ENCODE measurements at regions of chr7 and their contacts with region 1.

Region 1: GRCh38 chr7:100586266-100587025 is at the start of gene FBXO24:
- DNase-seq: peak; percentile 94
- ATAC-seq: peak; percentile 80
- H3K4me3 Mint-ChIP-seq: peak within 1 kb of the TSS; percentile 93
- H3K27ac Mint-ChIP-seq: peak within 1 kb of the TSS; percentile 96
- H3K4me1 Mint-ChIP-seq: peaks cover 38% of the 10 kb centered on the region
- H3K27me3 Mint-ChIP-seq: peaks cover 6% of the 10 kb centered on the region
- CTCF ChIP-seq: no peak
- total RNA-seq, gene FBXO24: 0.29 and 1.9 TPM in 2 replicates

Region 2: DNA sequence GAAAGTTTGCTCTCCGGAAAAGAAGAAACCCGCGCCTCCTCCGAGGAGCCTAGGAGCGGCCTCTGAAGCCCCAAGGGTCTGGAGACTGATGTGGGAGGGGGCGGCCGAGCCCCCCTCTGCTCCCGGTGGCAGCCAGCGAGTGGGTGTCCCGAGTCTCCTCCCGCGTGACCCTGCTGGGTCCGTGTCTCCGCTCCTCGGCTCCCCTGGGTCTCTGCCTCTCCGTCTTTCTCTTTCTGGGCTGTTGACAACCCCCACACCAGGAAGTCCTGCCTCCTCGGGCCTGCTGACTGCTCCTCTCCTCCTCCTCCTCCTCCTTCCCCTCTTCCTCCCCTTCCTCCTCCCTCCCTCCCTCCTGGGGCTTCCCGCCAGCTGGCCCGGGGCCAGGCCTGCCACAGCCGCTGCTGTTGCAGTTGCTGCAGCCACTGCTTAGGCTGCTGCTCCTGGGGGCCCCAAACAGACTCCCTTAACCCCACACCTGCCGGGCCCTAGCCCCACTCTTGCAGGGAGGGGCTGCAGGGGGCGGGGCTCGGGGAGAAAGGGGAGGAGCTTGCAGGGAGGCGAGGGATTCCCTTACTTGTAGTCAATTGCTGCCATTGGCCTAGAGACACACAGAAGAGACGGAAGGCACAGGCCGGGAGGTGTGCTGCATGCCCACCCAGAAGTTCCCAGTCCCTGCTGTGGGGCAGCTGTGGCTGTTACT is 107.3 kb before region 1 on chr7 and contains the start of gene TSC22D4:
- CTCF ChIA-PET with region 1: interaction called, 5 read pairs
- POLR2A ChIA-PET with region 1: interaction called, 8 read pairs
- intact Hi-C with region 1: loop called (anchors 1 kb)
- DNase-seq: peak; percentile 81
- ATAC-seq: peak; percentile 73
- H3K4me3 Mint-ChIP-seq: peak within 1 kb of the TSS; percentile 93
- H3K27ac Mint-ChIP-seq: peak within 1 kb of the TSS; percentile 86
- H3K4me1 Mint-ChIP-seq: peaks cover 41% of the 10 kb centered on the region
- H3K27me3 Mint-ChIP-seq: no peaks in the 10 kb centered on the region
- CTCF ChIP-seq: no peak
- total RNA-seq, gene TSC22D4: 60.2 and 68.7 TPM in 2 replicates

Region 3: GRCh38 chr7:100563809-100564400 is 22.5 kb before region 1 on chr7:
- CTCF ChIA-PET with region 1: interaction called, 24 read pairs
- POLR2A ChIA-PET with region 1: interaction called, 31 read pairs
- intact Hi-C with region 1: loop called (anchors 1 kb)
- DNase-seq: peak; percentile 79
- ATAC-seq: peak; percentile 78
- H3K4me3 Mint-ChIP-seq: no peak overlapping the region
- H3K27ac Mint-ChIP-seq: no peak overlapping the region
- H3K4me1 Mint-ChIP-seq: peaks cover 25% of the 10 kb centered on the region
- H3K27me3 Mint-ChIP-seq: no peaks in the 10 kb centered on the region
- CTCF ChIP-seq: peak; percentile 90

Region 4: GRCh38 chr7:100611974-100612729 is 25.7 kb after region 1 on chr7 and contains the start of gene MOSPD3:
- CTCF ChIA-PET with region 1: interaction called, 4 read pairs
- POLR2A ChIA-PET with region 1: interaction called, 114 read pairs
- intact Hi-C with region 1: loop called (anchors 1 kb)
- DNase-seq: peak; percentile 99
- ATAC-seq: peak; percentile 91
- H3K4me3 Mint-ChIP-seq: peak within 1 kb of the TSS; percentile 99
- H3K27ac Mint-ChIP-seq: peak within 1 kb of the TSS; percentile 100
- H3K4me1 Mint-ChIP-seq: peaks cover 19% of the 10 kb centered on the region
- H3K27me3 Mint-ChIP-seq: no peaks in the 10 kb centered on the region
- CTCF ChIP-seq: no peak
- total RNA-seq, gene MOSPD3: 10.5 and 11.9 TPM in 2 replicates

Region 5: GRCh38 chr7:100673300-100673941 is 87.0 kb after region 1 on chr7 and contains the start of gene GNB2:
- CTCF ChIA-PET with region 1: no interaction called
- POLR2A ChIA-PET with region 1: interaction called, 60 read pairs
- intact Hi-C with region 1: loop called (anchors 1 kb)
- DNase-seq: peak; percentile 99
- ATAC-seq: peak; percentile 67
- H3K4me3 Mint-ChIP-seq: peak within 1 kb of the TSS; percentile 97
- H3K27ac Mint-ChIP-seq: peak within 1 kb of the TSS; percentile 95
- H3K4me1 Mint-ChIP-seq: peaks cover 11% of the 10 kb centered on the region
- H3K27me3 Mint-ChIP-seq: no peaks in the 10 kb centered on the region
- CTCF ChIP-seq: no peak
- total RNA-seq, gene GNB2: 129 and 132 TPM in 2 replicates

Region 6: GRCh38 chr7:100803398-100804233 is 217.2 kb after region 1 on chr7:
- CTCF ChIA-PET with region 1: no interaction called
- POLR2A ChIA-PET with region 1: interaction called, 6 read pairs
- intact Hi-C with region 1: loop called (anchors 2 kb)
- DNase-seq: peak; percentile 62
- ATAC-seq: peak; percentile 97
- H3K4me3 Mint-ChIP-seq: peak overlapping the region; percentile 76
- H3K27ac Mint-ChIP-seq: peak overlapping the region; percentile 84
- H3K4me1 Mint-ChIP-seq: peaks cover 36% of the 10 kb centered on the region
- H3K27me3 Mint-ChIP-seq: no peaks in the 10 kb centered on the region
- CTCF ChIP-seq: no peak